ENCODE measurements at regions of chr20 and their contacts with region 1.

Region 1: DNA sequence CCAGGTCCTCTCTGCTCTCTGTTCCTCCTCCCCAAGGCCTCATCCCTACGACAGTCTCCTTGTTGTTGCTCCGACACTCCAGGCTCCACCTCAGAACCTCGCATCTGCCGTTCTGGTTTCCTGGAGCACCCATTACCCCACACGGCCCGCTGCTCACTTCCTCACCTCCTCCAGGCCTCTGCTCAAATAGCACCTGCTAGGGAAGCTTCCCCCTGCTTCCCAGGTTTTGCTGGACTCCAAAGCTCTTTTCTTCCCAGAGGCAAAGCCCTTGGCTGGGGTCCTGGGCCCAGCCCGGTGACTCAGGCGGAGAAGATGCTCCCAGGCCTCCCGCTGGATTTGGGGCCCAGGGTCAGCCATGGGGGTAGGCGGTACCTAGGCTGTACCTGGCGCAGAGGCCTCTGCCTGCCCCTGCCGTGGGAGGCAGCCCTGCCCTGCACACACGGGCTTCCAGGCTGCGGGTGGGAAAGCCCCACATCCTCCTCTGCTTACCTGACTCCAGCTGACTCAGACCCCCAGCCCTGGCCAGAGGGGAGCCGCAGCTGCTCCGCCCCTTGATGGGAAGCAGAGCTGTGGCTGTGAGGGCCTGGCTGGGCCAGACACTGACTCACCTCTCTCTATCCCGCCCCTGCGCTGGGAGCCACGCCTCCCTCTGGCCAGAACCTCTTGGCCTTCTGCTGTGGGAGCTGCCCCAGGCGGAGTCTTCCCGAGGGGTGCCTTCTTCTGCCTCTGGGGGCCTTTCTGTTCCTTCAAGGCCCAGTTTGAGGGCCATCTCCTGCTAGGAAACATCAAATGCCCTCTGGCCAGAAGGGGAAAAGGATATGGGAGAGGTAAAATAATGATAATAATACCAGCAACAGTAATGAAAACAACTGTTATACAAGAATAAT is 130.5 kb downstream of the CEBPB start:
- DNase-seq: peak; percentile 99
- H3K4me3 ChIP-seq: peak overlapping the region; percentile 15 to 49 (median 49)
- H3K27ac ChIP-seq: peak overlapping the region; percentile 90
- H3K4me1 ChIP-seq: peaks cover 48% of the 10 kb centered on the region
- H3K27me3 ChIP-seq: no peaks in the 10 kb centered on the region
- CTCF ChIP-seq: peak in 1 of 2 donors; percentile 11

Region 2: DNA sequence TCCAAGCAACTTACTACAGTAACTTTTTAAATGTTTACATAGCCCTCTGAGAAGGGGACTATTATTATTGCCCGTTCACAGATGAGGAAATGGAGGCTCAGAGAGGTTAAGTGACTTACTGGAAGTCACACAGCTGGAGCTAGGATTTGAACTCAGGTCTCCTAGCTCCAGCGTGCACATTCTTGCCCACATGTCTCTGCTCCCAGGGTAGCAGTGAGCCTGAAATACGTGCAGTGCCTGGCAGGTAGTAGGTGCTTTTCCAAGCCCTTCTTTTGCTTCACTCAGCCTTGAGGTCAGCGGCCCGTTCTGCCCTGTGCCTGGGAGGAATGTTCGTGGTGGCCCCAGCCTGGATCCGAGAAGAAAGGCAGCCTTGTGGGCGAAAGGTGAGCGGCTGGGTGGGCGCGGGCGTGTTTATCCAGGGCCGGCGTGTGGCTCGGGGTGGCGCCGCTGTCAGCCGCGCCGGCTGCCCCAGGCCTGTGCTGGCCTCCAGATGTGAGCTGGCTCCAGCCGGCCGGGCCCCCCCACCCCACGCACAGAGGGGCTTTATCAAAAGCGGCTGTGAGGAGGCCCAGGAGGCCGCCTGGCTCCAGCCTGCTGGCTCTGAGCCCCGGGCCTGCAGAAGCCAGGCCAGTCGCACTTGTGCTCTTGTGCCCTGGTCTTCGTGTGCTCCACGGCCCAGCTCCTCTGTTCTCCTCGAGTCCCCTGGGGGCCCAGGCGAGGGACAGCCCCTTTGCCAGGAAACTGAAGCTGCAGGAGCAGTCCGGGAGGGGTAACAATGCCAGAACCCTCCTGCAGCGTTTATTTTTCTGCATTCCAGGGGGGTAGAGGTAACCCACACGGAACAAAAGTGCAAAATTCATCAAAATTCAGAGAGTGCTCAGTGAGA is 266.3 kb before region 1 on chr20:
- CTCF ChIA-PET with region 1: no interaction called
- dilution Hi-C with region 1: no loop called
- in situ Hi-C with region 1: no loop called
- intact Hi-C with region 1: no loop called
- DNase-seq: no peak
- H3K4me3 ChIP-seq: no peak overlapping the region
- H3K27ac ChIP-seq: no peak overlapping the region
- H3K4me1 ChIP-seq: no peaks in the 10 kb centered on the region
- H3K27me3 ChIP-seq: no peaks in the 10 kb centered on the region
- CTCF ChIP-seq: no peak

Region 3: GRCh38 chr20:50286609-50287008 is 34.5 kb before region 1 on chr20:
- CTCF ChIA-PET with region 1: no interaction called
- dilution Hi-C with region 1: loop called (anchors 5 kb)
- in situ Hi-C with region 1: no loop called
- intact Hi-C with region 1: no loop called
- DNase-seq: peak; percentile 37
- H3K4me3 ChIP-seq: no peak overlapping the region
- H3K27ac ChIP-seq: no peak overlapping the region
- H3K4me1 ChIP-seq: peaks cover 24% of the 10 kb centered on the region
- H3K27me3 ChIP-seq: no peaks in the 10 kb centered on the region
- CTCF ChIP-seq: no peak

Region 4: DNA sequence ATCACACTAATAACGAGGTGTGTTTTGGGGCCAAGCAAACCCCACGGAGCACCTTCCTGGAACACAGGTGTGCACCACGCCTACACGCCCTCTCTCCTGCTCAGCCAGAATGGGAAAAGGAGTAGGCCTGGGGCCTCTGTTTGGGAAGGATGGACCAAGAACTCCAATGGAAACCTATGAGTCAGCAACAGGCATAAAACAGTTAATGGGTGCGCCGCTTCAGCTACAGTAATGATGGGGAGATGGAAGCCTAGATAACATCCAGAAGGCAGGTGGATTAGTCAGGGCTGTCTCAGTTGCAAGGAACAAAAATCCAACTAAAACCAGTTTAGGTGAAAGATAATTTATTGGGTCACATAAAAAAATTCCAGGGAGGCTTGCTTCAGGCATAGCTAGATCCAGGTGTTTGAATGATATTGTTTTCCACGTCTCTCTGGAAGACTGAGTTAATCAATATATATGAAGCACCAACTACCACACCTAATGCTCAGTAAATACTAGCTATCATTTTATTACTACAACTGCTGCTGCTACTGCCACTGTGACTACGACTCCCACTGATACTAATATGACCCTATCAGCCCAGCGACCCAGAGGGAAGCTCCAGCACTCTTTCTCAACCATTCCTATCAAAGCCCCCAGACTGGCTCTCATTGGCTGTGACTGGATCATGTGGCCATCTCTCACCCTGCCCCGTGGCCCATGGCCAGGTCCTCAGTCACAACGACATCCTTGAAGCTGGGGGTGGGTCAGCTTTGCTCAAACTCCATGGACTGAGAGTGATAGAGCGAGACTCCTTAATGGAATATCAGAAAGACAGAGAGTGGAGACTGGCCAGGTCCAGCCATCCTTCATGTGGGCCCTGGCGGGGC is 33.8 kb after region 1 on chr20:
- CTCF ChIA-PET with region 1: no interaction called
- dilution Hi-C with region 1: loop called (anchors 5 kb)
- in situ Hi-C with region 1: no loop called
- intact Hi-C with region 1: no loop called
- DNase-seq: peak; percentile 68
- H3K4me3 ChIP-seq: no peak overlapping the region
- H3K27ac ChIP-seq: no peak overlapping the region
- H3K4me1 ChIP-seq: peaks cover 1% of the 10 kb centered on the region
- H3K27me3 ChIP-seq: no peaks in the 10 kb centered on the region
- CTCF ChIP-seq: no peak

Region 5: DNA sequence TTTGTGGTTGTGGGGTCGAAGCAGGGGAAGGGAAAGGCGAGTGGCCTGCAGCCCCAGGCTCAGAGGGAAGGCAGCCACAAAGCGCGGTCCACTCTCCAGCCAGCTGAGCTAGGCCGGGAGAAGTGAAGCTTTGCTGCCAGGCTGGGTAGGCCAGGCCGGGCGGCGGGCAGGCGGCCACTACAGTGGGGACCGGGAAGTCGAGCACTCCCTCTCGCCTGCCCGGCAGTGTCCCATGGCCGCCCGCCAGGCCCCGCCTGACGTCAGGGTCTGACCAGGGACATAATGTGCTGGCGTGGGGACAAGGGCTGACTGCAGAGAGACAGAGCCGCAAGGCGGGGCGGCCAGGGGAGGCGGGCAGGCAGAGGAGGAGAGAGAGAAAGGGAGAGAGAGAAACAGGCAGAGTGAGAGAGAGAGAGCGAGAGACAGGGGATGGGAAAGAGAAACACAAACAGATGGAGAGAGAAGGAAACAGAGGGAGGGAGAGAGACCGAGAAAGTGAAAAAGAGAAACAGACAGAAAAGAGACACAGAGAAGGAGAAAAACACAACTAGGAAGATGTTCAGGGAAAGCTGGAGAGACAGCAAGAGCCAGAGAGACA is 94.5 kb after region 1 on chr20:
- CTCF ChIA-PET with region 1: no interaction called
- dilution Hi-C with region 1: loop called (anchors 5 kb)
- in situ Hi-C with region 1: no loop called
- intact Hi-C with region 1: no loop called
- DNase-seq: peak; percentile 78
- H3K4me3 ChIP-seq: no peak overlapping the region
- H3K27ac ChIP-seq: peak overlapping the region; percentile 73
- H3K4me1 ChIP-seq: peaks cover 22% of the 10 kb centered on the region
- H3K27me3 ChIP-seq: no peaks in the 10 kb centered on the region
- CTCF ChIP-seq: no peak

Region 6: DNA sequence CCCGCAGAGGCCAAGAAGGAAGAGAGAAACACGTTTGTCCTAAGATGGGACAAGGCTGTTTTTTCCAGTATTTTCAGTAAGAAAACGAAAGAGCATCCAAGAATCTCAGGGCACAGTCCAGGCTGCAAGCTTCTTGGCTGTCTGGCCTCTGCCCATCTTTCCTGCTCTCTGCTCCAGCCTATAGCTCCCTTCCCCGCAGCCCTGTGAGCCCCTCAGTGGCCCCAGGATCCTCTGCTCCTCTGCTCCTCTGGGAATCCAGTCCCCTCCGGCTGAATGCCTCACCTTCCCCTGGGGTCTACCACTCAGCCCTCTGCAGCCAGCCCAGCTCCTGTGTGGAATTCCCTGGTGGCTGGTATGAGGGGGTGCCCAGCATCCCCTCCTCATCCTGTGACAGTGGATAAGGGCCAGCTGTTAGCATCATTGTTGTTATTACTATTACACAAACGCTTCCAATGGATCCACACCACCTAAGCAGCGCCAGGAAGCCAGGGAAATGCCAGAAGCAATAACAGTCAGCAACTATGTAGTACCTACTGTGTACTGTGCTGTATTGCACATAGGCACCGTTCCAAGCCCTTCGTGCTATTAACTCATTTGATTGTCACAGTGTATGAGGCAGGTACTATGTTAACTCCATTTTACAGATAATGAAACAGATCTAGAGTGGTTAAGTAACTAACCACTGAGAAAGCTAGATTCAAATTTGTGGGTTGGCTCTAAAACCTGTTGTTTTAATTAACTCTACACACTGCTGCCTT is 128.8 kb after region 1 on chr20:
- CTCF ChIA-PET with region 1: no interaction called
- dilution Hi-C with region 1: loop called (anchors 5 kb)
- in situ Hi-C with region 1: no loop called
- intact Hi-C with region 1: no loop called
- DNase-seq: no peak
- H3K4me3 ChIP-seq: no peak overlapping the region
- H3K27ac ChIP-seq: no peak overlapping the region
- H3K4me1 ChIP-seq: peaks cover 13% of the 10 kb centered on the region
- H3K27me3 ChIP-seq: no peaks in the 10 kb centered on the region
- CTCF ChIP-seq: no peak